ENCODE measurements at regions of chr22 and their contacts with region 1.

Region 1: DNA sequence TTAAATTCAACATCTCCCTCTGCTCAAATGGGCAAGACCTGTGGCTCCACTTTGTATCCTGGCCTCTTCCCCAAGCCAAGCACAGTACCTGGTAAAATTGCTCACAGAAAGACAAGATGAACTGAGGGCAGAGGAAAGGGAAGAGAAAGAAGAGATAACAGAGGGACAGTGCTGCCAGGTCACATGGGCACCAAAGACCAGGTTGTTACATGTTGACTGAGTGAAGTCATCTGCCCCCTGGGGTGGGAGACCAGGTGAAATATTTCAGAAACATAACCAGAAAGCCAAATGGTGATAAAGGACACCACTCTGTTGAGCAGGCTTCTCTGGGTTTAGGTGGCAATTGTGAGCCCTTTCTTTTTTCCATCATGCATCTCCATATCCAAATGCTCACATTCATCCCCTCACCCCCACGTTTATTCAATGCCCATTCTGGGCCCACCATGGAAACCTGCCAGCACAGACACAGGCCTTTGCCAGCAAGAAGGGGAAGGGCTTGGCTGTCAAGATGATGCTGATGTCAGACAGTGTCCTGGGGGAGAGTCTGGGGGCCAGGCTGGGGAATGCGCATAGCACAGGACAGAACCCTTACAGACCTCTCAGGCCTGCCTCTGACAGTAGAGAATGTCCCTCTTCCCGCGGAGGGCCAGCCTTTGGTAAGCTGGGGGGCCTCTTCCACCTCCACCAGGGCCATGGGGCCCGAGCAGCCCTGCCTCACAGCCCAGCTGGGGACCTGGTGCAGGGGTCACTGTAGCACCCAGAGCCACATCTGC is 51.6 kb downstream of the DGCR2 start:
- DNase-seq: no peak
- ATAC-seq: no peak

Region 2: GRCh38 chr22:17699696-17700340 is 1370.8 kb before region 1 on chr22:
- intact Hi-C with region 1: loop called (anchors 5 kb)
- DNase-seq: no peak
- ATAC-seq: no peak

Region 3: DNA sequence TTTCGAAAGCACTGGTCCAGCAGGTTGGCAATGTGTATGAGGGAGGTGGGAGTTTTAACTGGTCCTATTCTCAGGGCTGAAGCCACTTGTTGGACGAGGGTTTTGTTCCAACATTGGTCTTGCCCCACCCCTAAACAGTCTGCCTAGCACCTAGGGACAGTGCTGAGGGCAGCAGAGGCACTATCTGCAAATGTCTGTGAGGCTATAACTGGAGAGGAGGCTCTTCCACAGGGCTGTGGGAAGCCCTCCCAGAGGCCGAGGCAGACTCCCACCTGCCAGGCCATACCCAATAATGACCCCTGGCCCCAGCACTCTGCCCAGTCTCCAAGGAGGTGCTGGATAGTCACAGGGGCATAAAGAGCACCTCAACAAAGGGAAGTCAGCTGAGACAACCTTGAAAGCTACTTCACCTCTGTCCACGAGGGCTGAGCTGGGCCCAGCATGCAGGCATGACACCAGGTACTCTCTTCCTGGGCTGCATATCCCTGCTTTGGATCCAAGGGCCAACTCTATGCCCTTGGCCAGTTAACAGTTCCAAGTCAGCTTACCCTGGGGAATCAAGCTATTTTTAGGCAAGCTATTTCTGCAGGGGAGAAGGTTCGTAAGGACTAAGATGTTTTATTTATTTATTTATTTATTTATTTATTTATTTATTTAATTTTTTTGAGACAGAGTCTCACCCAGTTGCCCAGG is 148.1 kb after region 1 on chr22:
- intact Hi-C with region 1: no loop called
- DNase-seq: no peak
- ATAC-seq: peak; percentile 47

Region 4: DNA sequence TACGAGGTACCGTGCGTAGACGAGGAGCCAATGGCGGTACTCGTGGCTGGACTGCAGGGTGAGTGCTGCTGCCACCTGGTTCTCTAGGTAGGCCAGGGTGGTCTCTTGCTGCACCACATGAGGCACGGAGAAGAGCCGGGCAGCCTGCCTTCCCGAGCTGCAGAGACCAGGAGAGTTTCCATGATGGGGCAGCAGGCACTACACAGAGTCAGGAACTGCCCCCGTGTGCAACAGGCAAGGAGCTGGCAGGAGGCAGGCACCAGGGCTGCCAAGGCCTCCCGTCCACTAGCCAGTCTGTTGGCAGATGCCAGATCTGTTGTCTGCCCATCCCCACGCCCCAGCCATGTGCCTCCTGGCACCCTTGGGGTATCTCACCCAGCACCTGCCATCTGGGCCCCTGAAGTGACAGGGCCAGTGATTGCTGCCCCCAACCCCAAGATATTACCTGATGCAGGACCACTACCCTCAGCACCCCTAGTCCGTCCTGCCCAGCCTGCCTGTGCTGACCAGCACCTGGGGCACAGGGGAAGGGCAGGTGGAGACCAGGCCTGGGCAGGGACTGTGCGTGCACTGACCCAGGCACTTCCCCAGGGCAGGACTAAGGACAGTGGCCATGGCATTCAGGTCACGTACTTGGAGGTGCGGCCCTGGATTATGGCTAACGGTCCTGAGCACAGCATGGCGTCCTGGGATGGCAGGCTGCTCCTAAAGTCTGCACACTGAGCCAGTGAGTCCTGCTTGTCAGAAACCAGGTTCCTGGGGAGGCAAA is 283.0 kb after region 1 on chr22:
- intact Hi-C with region 1: no loop called
- DNase-seq: no peak
- ATAC-seq: no peak

Region 5: GRCh38 chr22:19705181-19705934 is 634.8 kb after region 1 on chr22:
- intact Hi-C with region 1: no loop called
- DNase-seq: no peak
- ATAC-seq: no peak